A549 (cell line): ENCODE measurements at regions of chr7 and their contacts with region 1.

Region 1: DNA sequence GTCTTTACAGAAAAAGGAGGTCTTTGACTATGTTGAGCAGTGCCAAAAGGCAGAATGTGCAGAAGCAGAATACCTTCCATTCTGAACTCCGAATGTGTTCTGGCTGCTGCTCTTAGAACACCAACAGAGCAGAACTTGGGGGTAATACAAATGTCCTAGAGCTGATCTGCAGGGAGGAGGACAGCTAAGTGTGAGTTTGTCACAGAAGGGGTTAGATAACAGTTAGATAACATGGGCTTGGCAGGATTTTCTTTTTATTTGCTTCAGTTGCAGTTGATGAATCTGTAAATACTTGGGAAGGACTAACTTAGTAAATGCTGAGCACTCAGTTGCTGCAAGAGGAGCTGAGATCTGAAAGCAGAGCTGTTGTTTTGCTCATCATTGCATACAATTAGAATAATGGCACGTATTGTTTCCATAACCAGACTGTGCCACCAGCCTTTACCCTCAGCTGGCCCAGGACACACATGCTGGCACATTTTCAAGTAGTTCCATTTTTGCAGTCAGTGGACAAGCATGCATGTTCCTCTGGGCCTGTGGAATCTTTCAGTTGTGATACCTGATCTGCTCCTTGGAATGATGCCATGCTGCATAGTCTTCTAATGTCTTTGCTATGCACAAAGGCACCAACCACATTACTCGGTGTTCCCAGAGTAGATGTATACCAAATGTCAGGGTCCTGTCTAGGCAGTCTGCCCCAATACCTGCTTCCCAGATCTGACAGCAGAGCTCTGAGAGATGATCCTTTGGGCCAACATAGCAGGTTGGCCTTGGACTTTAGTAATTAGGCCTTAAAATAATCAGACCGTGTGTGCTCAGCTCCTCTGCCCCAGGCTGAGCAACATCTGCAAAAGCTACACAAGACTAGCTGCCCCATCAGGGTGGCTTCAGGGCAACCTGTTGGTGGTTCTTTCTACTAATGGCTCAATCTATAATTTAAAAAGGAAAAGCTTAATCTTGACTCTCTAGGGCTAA is 55.7 kb downstream of the GSDME start:
- DNase-seq: no peak
- ATAC-seq: peak in 1 of 2 experiments; percentile 18; a peak in 2 of 6 replicates
- H3K4me3 ChIP-seq: no peak overlapping the region
- H3K27ac ChIP-seq: no peak overlapping the region; a peak in 1 of 6 replicates
- H3K4me1 ChIP-seq: peaks cover 12% of the 10 kb centered on the region; the same call in 2 of the 3 replicates
- CTCF ChIP-seq: no peak
- EP300 ChIP-seq: no peak
- POLR2A ChIP-seq: no peak
- RAD21 ChIP-seq: no peak

Region 2: DNA sequence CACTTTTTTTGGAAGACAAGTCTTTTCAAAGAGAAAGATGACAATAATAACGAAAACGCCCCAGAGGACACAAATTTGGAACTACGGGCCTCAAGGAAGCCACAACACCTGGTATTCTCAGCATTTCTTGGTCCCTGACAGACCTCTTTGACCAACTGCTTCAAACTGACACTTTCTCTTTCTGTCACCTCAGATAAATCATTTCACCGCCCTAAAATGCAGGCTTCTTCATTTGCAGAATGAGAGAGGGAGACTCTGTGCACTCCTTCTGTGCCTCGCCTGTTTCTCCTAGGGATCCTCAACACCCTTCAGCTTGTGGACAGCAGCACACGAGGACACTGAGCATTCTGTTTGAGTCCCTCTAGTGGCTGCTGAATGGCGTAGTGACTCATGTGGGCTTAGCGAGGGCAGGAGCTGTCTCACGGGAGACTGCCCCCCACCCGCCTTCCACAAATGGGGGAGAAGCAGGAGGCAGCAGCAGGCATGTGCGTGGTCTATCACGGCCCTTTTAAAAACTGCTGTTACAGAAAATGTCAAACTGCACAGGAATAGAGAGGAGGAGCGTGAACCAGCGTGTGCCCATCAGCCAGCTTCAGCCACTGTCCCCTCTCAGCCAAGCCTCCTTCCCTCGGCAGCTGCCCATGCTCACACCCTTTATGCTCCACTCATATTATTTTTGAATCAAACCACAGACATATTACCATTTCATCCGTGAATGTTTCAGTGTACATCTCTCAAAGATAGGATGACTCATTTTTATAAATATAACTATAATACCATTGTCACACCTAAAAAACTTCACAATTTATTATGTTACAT is 14.3 kb after region 1 on chr7:
- CTCF ChIA-PET with region 1: interaction called, 14 read pairs
- POLR2A ChIA-PET with region 1: no interaction called
- DNase-seq: peak; percentile 53 to 60
- ATAC-seq: peak; percentile 88 to 91; a peak in 5 of 6 replicates
- H3K4me3 ChIP-seq: no peak overlapping the region
- H3K27ac ChIP-seq: no peak overlapping the region
- H3K4me1 ChIP-seq: peaks cover 4% of the 10 kb centered on the region; the same call in 1 of the 3 replicates
- CTCF ChIP-seq: peak; percentile 43
- EP300 ChIP-seq: no peak
- POLR2A ChIP-seq: no peak
- RAD21 ChIP-seq: peak; percentile 25 to 38; a peak in 3 of 5 replicates